Heart left ventricle (tissue), 16 donors: ENCODE measurements at regions of chr7 and their contacts with region 1.

Region 1: DNA sequence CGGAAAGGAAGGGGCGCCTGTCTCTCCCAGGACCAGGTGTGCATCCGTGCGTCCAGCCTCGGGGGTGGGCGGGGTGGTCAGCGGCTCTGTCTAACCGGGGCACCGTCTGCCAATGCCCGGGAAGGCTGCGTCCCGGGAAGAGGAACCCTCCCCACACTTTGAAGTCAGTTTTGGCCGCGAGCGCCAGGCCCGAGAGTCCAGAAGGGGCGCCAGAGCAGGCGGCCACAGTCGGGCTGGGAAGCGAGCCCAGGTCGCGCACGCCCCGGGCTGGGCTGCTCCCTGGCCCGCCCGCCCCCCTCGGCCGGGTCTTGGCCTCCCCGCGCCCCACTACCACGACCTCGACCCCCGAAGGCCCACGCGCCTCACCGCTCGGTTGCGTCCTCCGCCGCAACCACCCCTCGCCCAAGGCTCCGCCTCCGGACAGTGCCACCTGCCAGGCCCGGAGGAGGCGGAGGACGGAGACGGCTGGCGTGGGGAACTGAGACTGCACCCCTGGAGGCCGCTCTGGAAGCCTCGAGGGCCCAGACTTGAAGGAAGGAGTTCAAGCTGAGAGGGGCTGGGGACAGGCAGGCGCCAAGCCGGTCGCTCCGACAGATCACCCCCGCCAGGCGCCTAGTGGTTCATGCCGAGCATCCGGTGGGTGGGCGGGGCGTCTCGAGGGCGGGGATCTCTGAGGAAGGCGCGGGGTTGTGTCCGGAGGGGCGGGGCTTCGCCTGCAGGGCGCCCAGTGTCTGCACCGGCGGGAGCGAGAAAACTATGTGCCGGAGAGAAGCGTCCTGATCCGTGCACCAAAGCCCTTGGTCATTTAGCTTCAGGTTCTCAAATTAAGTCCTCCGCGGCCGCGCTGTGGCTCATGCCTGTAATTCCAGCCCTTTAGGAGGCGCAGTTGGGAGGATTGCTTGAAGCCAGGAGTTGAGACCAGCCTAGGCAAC is at the start of gene BRAT1:
- DNase-seq: peak; percentile 97 to 99 (median 98)
- ATAC-seq: peak; percentile 92 to 96 (median 93)
- H3K4me3 ChIP-seq: peak within 1 kb of the TSS; percentile 66 to 99 (median 88)
- H3K27ac ChIP-seq: peak within 1 kb of the TSS; percentile 94 to 100 (median 99)
- H3K4me1 ChIP-seq: peaks cover 0 to 55% (median 29%) of the 10 kb centered on the region in 12 donors
- H3K27me3 ChIP-seq: no peaks in the 10 kb centered on the region
- CTCF ChIP-seq: peak in 9 of 12 donors; percentile 12 to 67 (median 52)
- POLR2A ChIP-seq: peak in 1 of 2 donors; percentile 71
- total RNA-seq, gene BRAT1: 10.9 to 27.8 (median 14.9) TPM

Region 2: DNA sequence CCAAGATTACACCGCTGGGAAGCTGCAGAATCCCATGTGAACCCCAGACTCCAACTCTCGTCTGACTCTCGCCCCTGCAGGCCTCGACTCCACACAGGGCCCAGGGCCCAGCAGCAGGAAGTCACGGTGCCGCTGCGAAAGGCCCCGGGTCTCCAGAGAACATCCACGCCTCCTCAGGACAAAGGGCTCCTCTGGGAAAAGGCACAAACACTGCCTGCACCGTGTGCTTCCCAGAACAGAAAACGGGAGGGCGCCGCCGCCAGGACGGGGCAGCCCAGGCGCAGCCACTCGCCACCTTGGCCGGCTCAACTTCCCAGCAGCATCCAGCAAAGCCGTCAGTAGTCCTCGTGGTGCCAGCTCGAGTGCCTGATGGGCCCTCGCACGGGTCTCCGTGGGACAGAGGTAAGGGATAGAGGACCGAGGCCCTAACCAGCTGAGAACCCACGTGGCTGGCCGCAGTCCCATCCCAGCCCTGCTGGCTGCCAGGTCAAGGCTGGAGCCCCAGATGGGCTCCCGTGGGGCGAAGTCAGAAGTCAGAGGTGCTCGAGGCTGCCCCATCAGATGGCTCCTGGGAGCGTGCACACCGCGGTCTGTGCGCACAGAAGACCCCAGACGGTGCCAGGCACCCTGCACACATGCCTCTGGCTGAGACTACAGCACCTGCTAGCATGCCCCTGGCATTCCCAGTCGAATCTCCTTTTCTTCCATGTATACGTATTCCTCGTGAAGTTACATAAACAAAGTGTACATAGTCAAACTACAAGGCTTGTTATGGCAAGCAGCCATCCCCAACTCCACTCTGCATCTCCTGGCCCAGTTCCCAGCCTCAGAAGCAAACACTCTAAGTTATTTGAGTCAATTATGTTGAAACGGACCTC is 382.8 kb before region 1 on chr7:
- intact Hi-C with region 1: no loop called
- DNase-seq: no peak
- ATAC-seq: peak in 3 of 4 donors; percentile 18 to 33 (median 23)
- H3K4me3 ChIP-seq: no peak overlapping the region
- H3K27ac ChIP-seq: peak overlapping the region in 7 of 12 donors; percentile 16 to 63 (median 35)
- H3K4me1 ChIP-seq: peaks cover 4 to 40% (median 28%) of the 10 kb centered on the region in 12 donors
- H3K27me3 ChIP-seq: no peaks in the 10 kb centered on the region
- CTCF ChIP-seq: no peak
- POLR2A ChIP-seq: no peak

Region 3: GRCh38 chr7:2403014-2403717 is 152.2 kb before region 1 on chr7 and contains the start of gene CHST12:
- intact Hi-C with region 1: loop called in 1 of 10 experiments (anchors 5 kb)
- DNase-seq: peak; percentile 95 to 97 (median 96)
- ATAC-seq: peak; percentile 84 to 90 (median 89)
- H3K4me3 ChIP-seq: peak within 1 kb of the TSS; percentile 75 to 100 (median 93)
- H3K27ac ChIP-seq: peak within 1 kb of the TSS; percentile 43 to 89 (median 82)
- H3K4me1 ChIP-seq: peaks cover 3 to 74% (median 38%) of the 10 kb centered on the region in 12 donors
- H3K27me3 ChIP-seq: no peaks in the 10 kb centered on the region
- CTCF ChIP-seq: no peak
- POLR2A ChIP-seq: peak in 1 of 2 donors; percentile 67
- total RNA-seq, gene CHST12: 12.7 to 20.7 (median 15.6) TPM

Region 4: GRCh38 chr7:2477447-2478398 is 77.7 kb before region 1 on chr7:
- intact Hi-C with region 1: loop called in 4 of 10 experiments (anchors 5 to 10 kb)
- DNase-seq: peak; percentile 66 to 89 (median 72)
- ATAC-seq: peak; percentile 81 to 88 (median 84)
- H3K4me3 ChIP-seq: peak overlapping the region in 1 of 12 donors; percentile 12
- H3K27ac ChIP-seq: peak overlapping the region in 4 of 12 donors; percentile 12 to 47 (median 26)
- H3K4me1 ChIP-seq: peaks cover 4 to 37% (median 29%) of the 10 kb centered on the region in 12 donors
- H3K27me3 ChIP-seq: peaks cover 0 to 29% (median 0%) of the 10 kb centered on the region in 9 donors
- CTCF ChIP-seq: peak; percentile 66 to 83 (median 74)
- POLR2A ChIP-seq: no peak

Region 5: GRCh38 chr7:2482725-2483451 is 72.5 kb before region 1 on chr7:
- intact Hi-C with region 1: loop called in 4 of 10 experiments (anchors 5 to 10 kb)
- DNase-seq: peak in 1 of 5 donors; percentile 17
- ATAC-seq: no peak
- H3K4me3 ChIP-seq: no peak overlapping the region
- H3K27ac ChIP-seq: no peak overlapping the region
- H3K4me1 ChIP-seq: peaks cover 7 to 47% (median 29%) of the 10 kb centered on the region in 12 donors
- H3K27me3 ChIP-seq: peaks cover 0 to 8% (median 0%) of the 10 kb centered on the region in 9 donors
- CTCF ChIP-seq: no peak
- POLR2A ChIP-seq: no peak

Region 6: GRCh38 chr7:2519119-2519930 is 36.1 kb before region 1 on chr7 and contains the start of gene LFNG:
- intact Hi-C with region 1: loop called in 3 of 10 experiments (anchors 2 to 5 kb)
- DNase-seq: peak; percentile 88 to 94 (median 92)
- ATAC-seq: peak; percentile 82 to 91 (median 86)
- H3K4me3 ChIP-seq: peak within 1 kb of the TSS; percentile 38 to 94 (median 71)
- H3K27ac ChIP-seq: peak within 1 kb of the TSS in 10 of 12 donors; percentile 14 to 87 (median 61)
- H3K4me1 ChIP-seq: peaks cover 5 to 60% (median 40%) of the 10 kb centered on the region in 12 donors
- H3K27me3 ChIP-seq: peaks cover 0 to 38% (median 0%) of the 10 kb centered on the region in 9 donors
- CTCF ChIP-seq: no peak
- POLR2A ChIP-seq: peak; percentile 69 to 99
- total RNA-seq, gene LFNG: 3.1 to 22.8 (median 7.7) TPM

Region 7: GRCh38 chr7:2632733-2633537 is 77.5 kb after region 1 on chr7:
- intact Hi-C with region 1: loop called in 2 of 10 experiments (anchors 5 kb)
- DNase-seq: peak; percentile 66 to 81 (median 73)
- ATAC-seq: peak in 3 of 4 donors; percentile 2 to 13 (median 7)
- H3K4me3 ChIP-seq: peak overlapping the region; percentile 70 to 98 (median 90)
- H3K27ac ChIP-seq: peak overlapping the region; percentile 27 to 95 (median 84)
- H3K4me1 ChIP-seq: peaks cover 3 to 68% (median 55%) of the 10 kb centered on the region in 12 donors
- H3K27me3 ChIP-seq: no peaks in the 10 kb centered on the region
- CTCF ChIP-seq: no peak
- POLR2A ChIP-seq: no peak